IMR-90 (cell line): ENCODE measurements at regions of chr5 and their contacts with region 1.

Region 1: GRCh38 chr5:18068826-18069225 is 434.6 kb downstream of the TAF11L14 start:
- DNase-seq: no peak
- ATAC-seq: no peak
- H3K4me3 ChIP-seq: no peak overlapping the region
- H3K27ac ChIP-seq: no peak overlapping the region
- H3K4me1 ChIP-seq: no peaks in the 10 kb centered on the region
- H3K27me3 ChIP-seq: no peaks in the 10 kb centered on the region
- CTCF ChIP-seq: no peak
- POLR2A ChIP-seq: no peak
- RAD21 ChIP-seq: no peak

Region 2: GRCh38 chr5:18090177-18090576 is 21.4 kb after region 1 on chr5:
- CTCF ChIA-PET with region 1: no interaction called
- POLR2A ChIA-PET with region 1: no interaction called
- dilution Hi-C with region 1: no loop called
- in situ Hi-C with region 1: no loop called
- intact Hi-C with region 1: loop called (anchors 1 kb)
- DNase-seq: no peak
- ATAC-seq: no peak
- H3K4me3 ChIP-seq: no peak overlapping the region
- H3K27ac ChIP-seq: no peak overlapping the region
- H3K4me1 ChIP-seq: no peaks in the 10 kb centered on the region
- H3K27me3 ChIP-seq: no peaks in the 10 kb centered on the region
- CTCF ChIP-seq: no peak
- POLR2A ChIP-seq: no peak
- RAD21 ChIP-seq: no peak

Region 3: DNA sequence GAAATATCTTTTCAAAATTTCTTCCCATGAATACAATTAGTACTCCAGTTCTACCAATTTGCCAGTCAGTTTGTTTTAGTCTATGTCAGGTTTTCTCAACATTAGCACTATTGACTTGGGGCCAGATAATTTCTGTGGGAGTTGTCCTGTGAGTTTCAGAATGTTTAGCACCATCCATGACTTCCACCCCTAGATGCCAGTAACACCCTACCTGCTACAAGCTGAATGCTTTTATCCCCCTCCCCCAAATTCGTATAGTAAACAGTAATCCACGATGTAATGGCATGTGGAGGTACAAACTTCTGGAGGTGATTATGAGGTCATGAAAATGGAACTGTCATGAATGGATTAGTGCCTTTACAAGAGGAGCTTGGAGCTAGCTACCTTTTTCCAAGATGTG is 1499.2 kb after region 1 on chr5:
- CTCF ChIA-PET with region 1: no interaction called
- POLR2A ChIA-PET with region 1: no interaction called
- dilution Hi-C with region 1: no loop called
- in situ Hi-C with region 1: no loop called
- intact Hi-C with region 1: no loop called
- DNase-seq: no peak
- ATAC-seq: no peak
- H3K4me3 ChIP-seq: no peak overlapping the region
- H3K27ac ChIP-seq: no peak overlapping the region
- H3K4me1 ChIP-seq: no peaks in the 10 kb centered on the region
- H3K27me3 ChIP-seq: no peaks in the 10 kb centered on the region
- CTCF ChIP-seq: no peak
- POLR2A ChIP-seq: no peak
- RAD21 ChIP-seq: no peak